ENCODE measurements at regions of chr19 and their contacts with region 1.

Region 1: DNA sequence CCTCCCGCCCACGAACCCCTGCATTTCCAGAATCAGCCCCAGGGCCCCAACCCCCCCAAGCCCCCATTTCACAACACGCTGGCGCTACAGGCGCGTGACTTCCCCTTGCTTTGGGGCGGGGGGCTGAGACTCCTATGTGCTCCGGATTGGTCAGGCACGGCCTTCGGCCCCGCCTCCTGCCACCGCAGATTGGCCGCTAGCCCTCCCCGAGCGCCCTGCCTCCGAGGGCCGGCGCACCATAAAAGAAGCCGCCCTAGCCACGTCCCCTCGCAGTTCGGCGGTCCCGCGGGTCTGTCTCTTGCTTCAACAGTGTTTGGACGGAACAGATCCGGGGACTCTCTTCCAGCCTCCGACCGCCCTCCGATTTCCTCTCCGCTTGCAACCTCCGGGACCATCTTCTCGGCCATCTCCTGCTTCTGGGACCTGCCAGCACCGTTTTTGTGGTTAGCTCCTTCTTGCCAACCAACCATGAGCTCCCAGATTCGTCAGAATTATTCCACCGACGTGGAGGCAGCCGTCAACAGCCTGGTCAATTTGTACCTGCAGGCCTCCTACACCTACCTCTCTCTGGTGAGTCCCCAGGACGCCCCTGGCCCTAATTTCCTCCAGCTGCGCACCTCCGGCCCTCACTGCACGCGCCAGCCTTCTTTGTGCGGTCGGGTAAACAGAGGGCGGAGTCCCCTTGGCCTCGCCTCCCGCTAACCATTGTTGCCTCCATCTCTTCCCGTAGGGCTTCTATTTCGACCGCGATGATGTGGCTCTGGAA is at the start of gene FTL:
- DNase-seq: peak; percentile 97 to 100 (median 99)
- H3K4me3 ChIP-seq: peak within 1 kb of the TSS; percentile 61 to 99 (median 92)
- H3K27ac ChIP-seq: peak within 1 kb of the TSS; percentile 90 to 100 (median 98)
- H3K27me3 ChIP-seq: no peaks in the 10 kb centered on the region
- CTCF ChIP-seq: peak in 6 of 56 donors; percentile 8 to 23 (median 14)
- total RNA-seq, gene FTL: 795 to 2,828 (median 1,249) TPM

Region 2: GRCh38 chr19:48637170-48637947 is 327.9 kb before region 1 on chr19 and contains the start of gene DBP:
- intact Hi-C with region 1: loop called (anchors 5 to 10 kb)
- DNase-seq: peak; percentile 98 to 100 (median 99)
- H3K4me3 ChIP-seq: peak within 1 kb of the TSS; percentile 64 to 95 (median 80)
- H3K27ac ChIP-seq: peak within 1 kb of the TSS; percentile 80 to 100 (median 98)
- H3K27me3 ChIP-seq: no peaks in the 10 kb centered on the region
- CTCF ChIP-seq: peak in 10 of 56 donors; percentile 5 to 38 (median 18)
- total RNA-seq, gene DBP: 24.9 to 77.5 (median 41.6) TPM

Region 3: GRCh38 chr19:48795055-48795684 is 170.1 kb before region 1 on chr19:
- intact Hi-C with region 1: loop called (anchors 2 to 5 kb)
- DNase-seq: peak; percentile 88 to 97 (median 96)
- H3K4me3 ChIP-seq: peak overlapping the region; percentile 15 to 78 (median 65)
- H3K27ac ChIP-seq: peak overlapping the region; percentile 47 to 95 (median 88)
- H3K27me3 ChIP-seq: no peaks in the 10 kb centered on the region
- CTCF ChIP-seq: peak; percentile 88 to 100 (median 98)

Region 4: GRCh38 chr19:48872182-48872883 is 92.9 kb before region 1 on chr19 and contains the start of gene PPP1R15A:
- intact Hi-C with region 1: loop called (anchors 2 to 5 kb)
- DNase-seq: peak; percentile 98 to 100 (median 99)
- H3K4me3 ChIP-seq: peak within 1 kb of the TSS; percentile 74 to 100 (median 97)
- H3K27ac ChIP-seq: peak within 1 kb of the TSS; percentile 73 to 100 (median 98)
- H3K27me3 ChIP-seq: no peaks in the 10 kb centered on the region
- CTCF ChIP-seq: peak in 35 of 56 donors; percentile 14 to 47 (median 26)
- total RNA-seq, gene PPP1R15A: 16.8 to 138 (median 25.5) TPM

Region 5: DNA sequence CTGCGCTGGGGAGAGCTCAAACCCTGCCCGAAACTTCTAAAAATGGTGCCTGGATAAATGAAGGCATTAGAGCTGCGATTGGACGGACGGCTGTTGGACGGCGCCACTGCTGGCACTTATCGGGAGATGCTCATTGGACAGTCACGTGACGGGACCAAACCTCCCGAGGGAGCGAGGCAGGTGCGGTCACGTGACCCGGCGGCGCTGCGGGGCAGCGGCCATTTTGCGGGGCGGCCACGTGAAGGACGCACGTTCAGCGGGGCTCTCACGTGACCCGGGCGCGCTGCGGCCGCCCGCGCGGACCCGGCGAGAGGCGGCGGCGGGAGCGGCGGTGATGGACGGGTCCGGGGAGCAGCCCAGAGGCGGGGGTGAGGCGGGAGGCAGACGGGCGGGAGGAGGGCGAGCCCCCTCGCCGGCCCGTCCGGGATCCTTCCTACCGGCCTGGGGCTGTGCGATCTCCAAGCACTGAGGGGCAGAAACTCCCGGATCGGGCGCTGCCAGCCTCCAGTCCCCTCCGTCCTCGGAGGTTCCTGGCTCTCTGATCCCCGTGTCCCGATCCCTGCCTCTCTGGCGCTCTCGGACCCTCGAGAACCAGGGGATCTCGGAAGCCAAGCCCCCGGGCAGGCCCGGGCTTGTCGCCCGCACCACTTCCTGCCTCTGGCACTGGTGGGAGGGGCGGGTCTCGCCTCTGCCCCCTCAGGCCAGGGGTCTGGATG is 10.5 kb before region 1 on chr19 and contains the start of gene BAX:
- intact Hi-C with region 1: loop called (anchors 1 kb)
- DNase-seq: peak; percentile 94 to 99 (median 96)
- H3K4me3 ChIP-seq: peak within 1 kb of the TSS; percentile 68 to 100 (median 97)
- H3K27ac ChIP-seq: peak within 1 kb of the TSS; percentile 74 to 98 (median 93)
- H3K27me3 ChIP-seq: no peaks in the 10 kb centered on the region
- CTCF ChIP-seq: peak in 43 of 56 donors; percentile 10 to 59 (median 36)
- total RNA-seq, gene BAX: 24.4 to 60.6 (median 39.2) TPM

Region 6: GRCh38 chr19:48993175-48994034 is 28.2 kb after region 1 on chr19 and contains the starts of genes GYS1 and RUVBL2:
- intact Hi-C with region 1: loop called (anchors 1 to 2 kb)
- DNase-seq: peak; percentile 98 to 100 (median 99)
- H3K4me3 ChIP-seq: peak within 1 kb of the TSS; percentile 63 to 100 (median 93)
- H3K27ac ChIP-seq: peak within 1 kb of the TSS; percentile 73 to 99 (median 96)
- H3K27me3 ChIP-seq: no peaks in the 10 kb centered on the region
- CTCF ChIP-seq: peak; percentile 74 to 99 (median 96)
- total RNA-seq, gene GYS1: 17.6 to 67.9 (median 37.0) TPM
- total RNA-seq, gene RUVBL2: 39.7 to 85.0 (median 53.9) TPM